ENCODE measurements at regions of chr9 and their contacts with region 1.

Region 1: DNA sequence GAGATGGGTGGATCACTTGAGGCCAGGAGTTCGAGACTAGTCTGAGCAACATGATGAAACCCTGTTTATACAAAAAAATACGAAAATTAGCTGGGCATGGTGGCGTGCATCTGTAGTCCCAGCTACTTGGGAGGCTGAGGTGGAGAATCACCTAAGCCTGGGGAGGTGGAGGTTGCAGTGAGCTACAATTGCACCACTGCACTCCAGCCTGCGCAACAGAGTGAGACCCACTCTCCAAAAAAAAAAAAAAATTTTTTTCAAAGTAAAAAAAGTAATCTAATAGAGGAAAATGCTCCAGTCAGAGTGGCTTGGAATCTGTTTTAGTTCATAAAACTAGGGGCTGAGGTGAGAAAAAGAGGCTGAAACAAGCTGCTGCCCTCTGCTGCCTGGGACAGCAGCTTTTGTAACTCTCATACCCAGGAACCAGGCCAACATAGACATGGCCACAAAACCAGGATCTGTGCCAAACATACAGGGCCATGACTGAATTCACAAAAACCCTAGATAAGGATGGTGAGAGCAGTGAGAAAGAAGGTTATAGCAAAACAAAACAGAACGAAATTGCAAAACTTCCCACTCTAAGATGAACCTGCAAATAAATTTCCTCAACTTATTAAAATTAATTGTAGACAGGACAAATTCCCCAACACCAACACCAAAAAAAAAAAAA is 13.1 kb upstream of the DCAF12 start:
- DNase-seq: peak; percentile 60
- H3K4me3 ChIP-seq: no peak overlapping the region
- H3K27ac ChIP-seq: no peak overlapping the region
- H3K27me3 ChIP-seq: no peaks in the 10 kb centered on the region
- CTCF ChIP-seq: peak; percentile 40

Region 2: GRCh38 chr9:34126207-34127034 is 13.2 kb before region 1 on chr9 and contains the start of gene DCAF12:
- CTCF ChIA-PET with region 1: no interaction called
- POLR2A ChIA-PET with region 1: interaction called, 10 read pairs
- DNase-seq: peak; percentile 73
- H3K4me3 ChIP-seq: peak within 1 kb of the TSS; percentile 98
- H3K27ac ChIP-seq: peak within 1 kb of the TSS; percentile 85
- H3K27me3 ChIP-seq: no peaks in the 10 kb centered on the region
- CTCF ChIP-seq: no peak
- polyA plus RNA-seq, gene DCAF12: 27.8 and 29.4 TPM in 2 replicates

Measured in AG04450 (cell line).